HepG2 (cell line): ENCODE measurements at regions of chr3 and their contacts with region 1.

Region 1: GRCh38 chr3:138834359-138835212 is at the start of gene PIK3CB:
- DNase-seq: peak; percentile 72
- ATAC-seq: peak; percentile 95
- H3K4me3 ChIP-seq: peak within 1 kb of the TSS; percentile 80 to 94 (median 86)
- H3K27ac ChIP-seq: peak within 1 kb of the TSS; percentile 95
- H3K4me1 ChIP-seq: peaks cover 39% of the 10 kb centered on the region
- H3K27me3 ChIP-seq: no peaks in the 10 kb centered on the region; a peak in 1 of 5 replicates
- CTCF ChIP-seq: peak; percentile 72
- EP300 ChIP-seq: no peak
- POLR2A ChIP-seq: peak; percentile 91 to 92
- RAD21 ChIP-seq: peak; percentile 84
- total RNA-seq, gene PIK3CB: 6.6 and 18.6 TPM in 2 replicates

Region 2: DNA sequence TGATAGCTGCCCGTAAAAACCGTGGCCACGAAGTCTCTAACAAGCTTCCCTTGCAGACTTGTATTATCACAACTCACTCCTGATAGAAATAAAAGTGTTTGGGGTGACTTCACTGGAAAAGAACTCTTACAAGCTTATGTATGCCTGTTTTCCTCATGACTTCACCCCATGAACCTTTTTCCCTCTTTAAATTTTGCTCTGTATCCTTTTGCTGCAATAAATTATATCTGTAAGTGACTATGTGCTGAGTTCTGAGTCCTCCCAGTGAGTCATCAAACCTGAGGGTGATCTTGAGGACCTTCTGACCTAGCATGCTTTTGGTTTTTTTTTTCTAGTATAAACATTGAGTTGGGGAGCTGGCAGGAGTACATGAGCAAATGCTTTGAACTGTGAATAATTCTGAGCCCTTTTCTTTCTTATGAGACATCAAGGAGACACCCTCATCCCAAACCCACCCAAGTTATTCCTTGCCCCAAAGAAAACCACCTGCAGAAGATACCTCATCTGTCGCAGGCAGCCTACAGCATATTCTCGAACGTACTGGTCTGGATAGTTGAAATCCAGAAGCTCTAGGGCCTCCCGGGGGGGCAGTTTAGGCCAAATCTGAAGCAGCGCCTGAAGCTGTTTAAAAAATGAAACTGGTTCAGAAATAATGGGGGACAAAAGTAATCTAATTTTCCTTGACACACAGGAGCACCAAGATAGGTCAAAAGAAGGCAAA is 140.1 kb before region 1 on chr3:
- CTCF ChIA-PET with region 1: no interaction called
- POLR2A ChIA-PET with region 1: no interaction called
- in situ Hi-C with region 1: no loop called
- intact Hi-C with region 1: loop called (anchors 2 kb)
- DNase-seq: no peak
- ATAC-seq: no peak
- H3K4me3 ChIP-seq: no peak overlapping the region
- H3K27ac ChIP-seq: no peak overlapping the region
- H3K4me1 ChIP-seq: peaks cover 3% of the 10 kb centered on the region
- H3K27me3 ChIP-seq: no peaks in the 10 kb centered on the region
- CTCF ChIP-seq: no peak
- EP300 ChIP-seq: no peak
- POLR2A ChIP-seq: no peak
- RAD21 ChIP-seq: no peak

Region 3: DNA sequence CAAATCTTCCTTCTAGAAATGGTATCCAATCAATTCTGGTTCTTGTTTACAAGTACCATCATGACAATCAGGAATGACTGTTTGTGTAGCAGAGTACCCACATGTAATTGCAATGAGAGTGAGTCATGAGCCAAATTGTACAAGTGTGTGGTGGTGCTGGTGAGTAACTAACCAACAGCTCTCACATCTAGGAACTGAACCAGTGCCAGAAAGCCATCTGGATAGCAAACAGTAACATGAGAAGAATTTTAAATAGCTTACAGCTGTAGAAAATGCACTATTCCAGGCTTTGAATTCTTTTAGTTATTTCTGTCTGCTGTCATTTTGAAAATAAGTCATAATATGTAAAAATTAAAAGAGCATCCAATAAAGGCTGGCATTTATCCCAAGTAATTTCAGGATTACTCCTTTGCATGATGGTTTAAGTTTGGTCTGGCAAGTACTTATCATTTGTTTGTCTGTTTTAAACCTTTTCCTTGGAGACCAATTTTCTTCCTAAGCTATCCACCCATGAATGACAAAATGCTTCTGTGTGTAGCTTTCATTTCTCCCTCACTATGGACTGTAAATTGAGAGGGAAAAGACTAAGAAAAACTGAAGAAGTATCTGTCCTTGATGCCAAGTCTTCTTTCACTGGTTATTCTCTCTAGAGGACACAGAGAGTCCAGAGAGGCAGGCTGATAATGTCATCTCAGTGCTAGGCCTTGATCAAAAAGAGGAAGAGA is 59.9 kb before region 1 on chr3:
- CTCF ChIA-PET with region 1: interaction called, 3 read pairs
- POLR2A ChIA-PET with region 1: no interaction called
- in situ Hi-C with region 1: no loop called
- intact Hi-C with region 1: loop called (anchors 10 kb)
- DNase-seq: peak; percentile 71
- ATAC-seq: peak; percentile 82
- H3K4me3 ChIP-seq: no peak overlapping the region
- H3K27ac ChIP-seq: peak overlapping the region; percentile 43
- H3K4me1 ChIP-seq: peaks cover 24% of the 10 kb centered on the region
- H3K27me3 ChIP-seq: no peaks in the 10 kb centered on the region
- CTCF ChIP-seq: 0 out of 2 replicates have a peak, but pooled peaks have one; percentile 9
- EP300 ChIP-seq: no peak
- POLR2A ChIP-seq: no peak
- RAD21 ChIP-seq: no peak

Region 4: GRCh38 chr3:138824114-138824506 is 10.5 kb before region 1 on chr3:
- CTCF ChIA-PET with region 1: no interaction called
- POLR2A ChIA-PET with region 1: interaction called, 20 read pairs
- in situ Hi-C with region 1: no loop called
- intact Hi-C with region 1: no loop called
- DNase-seq: no peak
- ATAC-seq: peak; percentile 69
- H3K4me3 ChIP-seq: no peak overlapping the region
- H3K27ac ChIP-seq: peak overlapping the region; percentile 67
- H3K4me1 ChIP-seq: peaks cover 50% of the 10 kb centered on the region
- H3K27me3 ChIP-seq: no peaks in the 10 kb centered on the region; a peak in 1 of 5 replicates
- CTCF ChIP-seq: no peak
- EP300 ChIP-seq: no peak
- POLR2A ChIP-seq: no peak
- RAD21 ChIP-seq: no peak